Activated T-helper 2 cell treated with anti-CD3 and anti-CD28 coated beads, Interferon-gamma antibody, Interleukin-2, Interleukin-4, amounts not matched to agents 10 μg/mL and 5 μg/mL and 100 μg/mL, durations not matched to agents 14 hours and 24 hours and 36 hours (primary cell): ENCODE measurements at regions of chr3 and their contacts with region 1.

Region 1: GRCh38 chr3:125374996-125375941 is at the start of gene ZNF148:
- DNase-seq: peak; percentile 89
- H3K4me3 Mint-ChIP-seq: peak within 1 kb of the TSS; percentile 98
- H3K27ac Mint-ChIP-seq: peak within 1 kb of the TSS; percentile 97
- H3K4me1 Mint-ChIP-seq: peaks cover 29% of the 10 kb centered on the region
- H3K27me3 Mint-ChIP-seq: no peaks in the 10 kb centered on the region
- total RNA-seq, gene ZNF148: 33.2 and 37.0 TPM in 2 replicates

Region 2: GRCh38 chr3:125055913-125056745 is 319.1 kb before region 1 on chr3 and contains the start of gene HEG1:
- intact Hi-C with region 1: loop called (anchors 5 kb)
- DNase-seq: peak; percentile 75
- H3K4me3 Mint-ChIP-seq: peak within 1 kb of the TSS; percentile 95
- H3K27ac Mint-ChIP-seq: peak within 1 kb of the TSS; percentile 89
- H3K4me1 Mint-ChIP-seq: peaks cover 47% of the 10 kb centered on the region
- H3K27me3 Mint-ChIP-seq: peaks cover 27% of the 10 kb centered on the region
- total RNA-seq, gene HEG1: 58.0 and 59.1 TPM in 2 replicates

Region 3: DNA sequence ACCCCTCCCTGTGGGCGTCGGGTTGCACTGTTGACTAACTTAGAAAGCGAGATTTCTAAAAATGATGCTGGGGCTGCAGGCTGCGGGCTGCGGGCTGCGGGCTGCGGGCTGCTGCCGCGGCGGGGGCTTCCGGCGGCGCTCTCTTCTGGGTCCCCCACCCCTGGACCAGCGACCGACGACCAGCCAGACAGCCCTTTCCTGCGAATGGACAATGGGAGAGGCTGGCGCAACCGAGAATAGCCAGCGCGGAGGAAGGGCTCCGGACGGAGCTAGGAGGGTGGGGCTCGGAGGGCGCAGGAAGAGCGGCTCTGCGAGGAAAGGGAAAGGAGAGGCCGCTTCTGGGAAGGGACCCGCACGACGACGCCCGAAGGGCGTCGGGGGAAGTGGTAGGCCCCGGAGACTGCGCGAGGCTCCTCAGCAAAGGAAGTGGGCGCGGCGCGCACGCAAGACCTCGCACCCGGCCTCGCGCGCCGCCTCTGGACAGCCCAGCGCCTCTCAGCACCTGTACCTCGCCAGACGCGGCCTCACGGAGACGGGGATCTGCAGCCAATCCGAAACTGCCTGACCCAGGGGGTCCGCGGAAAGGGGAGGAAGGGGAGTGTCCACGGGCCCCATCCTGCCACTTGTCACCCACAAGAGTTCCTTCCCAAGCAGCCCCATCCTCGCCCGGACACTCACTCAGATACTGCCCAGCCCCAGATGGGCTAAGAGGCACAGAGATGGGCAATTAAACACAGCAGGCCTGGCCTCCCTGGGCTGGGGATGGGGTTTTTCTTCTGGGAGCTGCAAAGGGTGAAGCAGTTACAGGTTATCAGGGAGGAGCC is 233.5 kb before region 1 on chr3:
- intact Hi-C with region 1: loop called (anchors 5 kb)
- DNase-seq: peak; percentile 72
- H3K4me3 Mint-ChIP-seq: peak overlapping the region; percentile 74
- H3K27ac Mint-ChIP-seq: peak overlapping the region; percentile 89
- H3K4me1 Mint-ChIP-seq: peaks cover 51% of the 10 kb centered on the region
- H3K27me3 Mint-ChIP-seq: peaks cover 55% of the 10 kb centered on the region

Region 4: DNA sequence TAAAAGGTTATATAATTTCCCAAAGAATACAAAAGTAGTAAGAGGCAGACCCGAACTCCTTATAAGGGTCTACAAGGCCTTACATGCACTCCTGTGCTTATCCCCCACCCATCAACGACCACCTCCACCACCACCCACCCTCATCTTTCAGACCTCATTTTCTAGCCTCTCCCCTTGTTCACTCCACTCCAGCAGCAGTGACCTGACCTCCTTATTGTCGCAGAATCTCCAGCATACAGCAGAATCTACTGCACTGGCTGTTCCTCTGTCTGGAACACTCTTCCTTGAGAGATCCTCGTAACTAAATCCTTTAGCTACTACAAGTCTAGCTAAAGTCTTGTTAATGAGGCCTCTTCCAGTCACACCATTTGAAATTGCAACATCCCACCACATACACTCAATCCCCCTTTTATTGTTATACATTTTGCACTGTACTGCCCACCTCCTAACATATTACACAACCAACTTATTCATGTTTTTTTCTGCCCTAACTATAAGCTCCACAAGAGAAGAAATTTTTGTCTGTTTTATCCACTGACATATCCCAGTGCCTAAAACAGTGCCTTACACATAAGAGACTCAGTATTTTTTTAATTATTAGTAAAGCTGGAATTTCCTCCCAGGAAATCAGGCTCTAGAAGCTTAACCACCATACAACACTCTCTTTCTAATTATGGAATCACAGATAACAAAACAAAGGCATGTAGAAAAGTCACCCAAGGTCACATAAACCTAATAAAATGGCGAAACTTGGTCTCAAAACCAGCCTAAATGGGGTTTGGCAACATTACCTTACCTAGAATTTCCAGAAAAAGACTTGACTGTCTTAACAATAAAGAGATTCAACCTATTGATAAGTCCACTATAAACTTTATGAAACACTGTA is 40.4 kb before region 1 on chr3:
- intact Hi-C with region 1: loop called (anchors 5 kb)
- DNase-seq: no peak
- H3K4me3 Mint-ChIP-seq: no peak overlapping the region
- H3K27ac Mint-ChIP-seq: no peak overlapping the region
- H3K4me1 Mint-ChIP-seq: peaks cover 38% of the 10 kb centered on the region
- H3K27me3 Mint-ChIP-seq: no peaks in the 10 kb centered on the region

Region 5: DNA sequence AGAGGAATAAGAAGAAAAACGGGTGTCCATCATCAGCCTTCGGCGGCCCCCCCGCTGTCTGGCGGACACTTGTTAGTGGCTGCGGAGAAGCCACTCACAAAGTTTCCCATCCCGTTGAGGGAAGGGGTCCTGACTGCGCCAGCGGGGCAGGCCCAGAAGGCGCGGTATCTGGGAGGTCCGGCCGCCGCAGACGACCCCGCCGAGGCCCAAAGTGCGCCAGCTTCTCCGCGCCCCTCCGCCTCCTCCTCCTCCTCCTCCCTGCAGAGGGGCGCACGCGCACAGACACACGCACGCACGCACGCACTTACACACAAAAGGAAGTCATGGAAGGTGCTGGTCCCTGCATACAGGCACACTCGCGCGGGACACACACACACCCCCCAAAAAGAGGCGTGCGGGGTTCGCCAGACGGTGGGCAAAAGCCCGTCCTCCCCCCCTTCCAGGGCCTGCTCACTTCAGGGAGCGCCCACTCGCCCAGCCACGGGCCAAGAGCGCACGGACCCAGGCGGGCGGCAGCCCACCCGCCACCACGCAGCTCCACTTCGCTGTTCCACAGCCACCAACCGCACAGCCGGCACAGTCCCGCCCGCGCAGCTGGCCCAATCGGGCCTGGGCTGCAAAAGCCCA is 18.1 kb before region 1 on chr3:
- intact Hi-C with region 1: loop called (anchors 2 kb)
- DNase-seq: peak; percentile 36
- H3K4me3 Mint-ChIP-seq: peak overlapping the region; percentile 78
- H3K27ac Mint-ChIP-seq: peak overlapping the region; percentile 66
- H3K4me1 Mint-ChIP-seq: peaks cover 43% of the 10 kb centered on the region
- H3K27me3 Mint-ChIP-seq: no peaks in the 10 kb centered on the region

Region 6: DNA sequence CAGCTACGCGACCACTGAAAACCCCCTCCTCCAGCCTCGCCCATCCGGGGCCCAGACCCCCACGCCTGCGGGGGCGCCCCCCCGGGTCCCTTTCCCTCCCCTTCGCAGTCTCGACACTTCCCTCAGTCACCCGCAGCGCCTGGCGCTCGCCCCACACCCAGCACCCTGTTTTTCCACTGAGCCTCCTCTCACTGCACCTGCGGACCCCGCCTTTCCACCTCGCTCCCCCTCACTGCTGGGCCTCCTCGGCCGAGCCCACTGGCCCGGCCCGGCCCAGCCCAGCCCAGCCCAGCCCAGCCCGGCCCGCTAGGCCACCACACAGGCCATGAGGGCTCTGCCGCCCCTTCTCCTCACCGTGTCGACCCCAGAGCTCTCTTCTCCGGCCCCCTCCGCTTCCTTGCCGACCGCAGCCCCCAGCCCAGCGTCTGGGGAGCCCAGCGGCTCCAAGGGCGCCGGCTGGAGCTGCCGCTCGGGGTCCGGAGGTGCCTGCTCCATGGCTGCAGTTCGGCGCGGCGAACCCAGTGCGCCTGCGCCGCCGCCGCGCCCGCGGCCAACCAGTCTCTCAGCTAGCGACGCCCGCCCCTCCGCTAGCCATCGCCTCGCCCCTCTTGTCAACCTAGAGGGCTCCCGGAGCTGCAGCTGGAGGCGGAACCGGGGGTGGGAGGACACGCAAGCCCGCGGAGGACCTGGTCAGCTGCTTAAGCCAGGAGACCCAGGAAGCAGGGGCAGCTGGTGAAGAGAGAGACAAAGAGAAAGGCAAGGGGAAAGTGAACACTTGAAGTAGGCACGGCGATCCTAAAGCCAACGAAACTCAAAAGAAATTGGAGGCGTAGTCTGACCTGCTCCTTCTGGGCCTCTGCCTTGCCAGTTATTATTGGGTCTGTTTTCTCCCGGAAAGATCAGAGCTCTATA is 144.7 kb after region 1 on chr3 and contains the start of gene SNX4:
- intact Hi-C with region 1: loop called (anchors 10 kb)
- DNase-seq: peak; percentile 79
- H3K4me3 Mint-ChIP-seq: peak within 1 kb of the TSS; percentile 89
- H3K27ac Mint-ChIP-seq: peak within 1 kb of the TSS; percentile 80
- H3K4me1 Mint-ChIP-seq: peaks cover 22% of the 10 kb centered on the region
- H3K27me3 Mint-ChIP-seq: no peaks in the 10 kb centered on the region
- total RNA-seq, gene SNX4: 46.3 and 50.7 TPM in 2 replicates

Region 7: DNA sequence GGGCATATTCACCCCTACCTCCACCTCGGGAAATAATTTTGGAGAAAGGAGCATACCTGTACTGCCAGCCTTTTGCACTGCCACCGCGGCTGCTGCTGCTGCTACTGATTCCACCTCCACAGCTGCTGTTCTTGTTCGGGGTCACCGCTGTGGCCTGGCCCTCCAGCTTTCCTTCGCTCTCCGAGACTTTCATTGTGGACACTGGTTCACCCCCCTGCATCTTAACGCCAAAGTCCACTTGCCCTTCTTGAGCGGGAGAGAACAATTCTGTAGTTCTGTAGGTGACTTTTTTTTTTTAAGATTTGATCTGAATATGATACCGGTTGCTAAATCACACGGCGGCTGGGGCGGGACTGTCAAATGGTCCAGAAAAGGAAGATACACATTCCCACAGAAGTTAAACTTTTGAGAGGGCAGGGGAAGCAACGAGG is 219.3 kb after region 1 on chr3:
- intact Hi-C with region 1: loop called (anchors 10 kb)
- DNase-seq: peak; percentile 18
- H3K4me3 Mint-ChIP-seq: peak overlapping the region; percentile 98
- H3K27ac Mint-ChIP-seq: peak overlapping the region; percentile 90
- H3K4me1 Mint-ChIP-seq: peaks cover 30% of the 10 kb centered on the region
- H3K27me3 Mint-ChIP-seq: no peaks in the 10 kb centered on the region